ENCODE measurements at regions of chr3 and their contacts with region 1.

Region 1: DNA sequence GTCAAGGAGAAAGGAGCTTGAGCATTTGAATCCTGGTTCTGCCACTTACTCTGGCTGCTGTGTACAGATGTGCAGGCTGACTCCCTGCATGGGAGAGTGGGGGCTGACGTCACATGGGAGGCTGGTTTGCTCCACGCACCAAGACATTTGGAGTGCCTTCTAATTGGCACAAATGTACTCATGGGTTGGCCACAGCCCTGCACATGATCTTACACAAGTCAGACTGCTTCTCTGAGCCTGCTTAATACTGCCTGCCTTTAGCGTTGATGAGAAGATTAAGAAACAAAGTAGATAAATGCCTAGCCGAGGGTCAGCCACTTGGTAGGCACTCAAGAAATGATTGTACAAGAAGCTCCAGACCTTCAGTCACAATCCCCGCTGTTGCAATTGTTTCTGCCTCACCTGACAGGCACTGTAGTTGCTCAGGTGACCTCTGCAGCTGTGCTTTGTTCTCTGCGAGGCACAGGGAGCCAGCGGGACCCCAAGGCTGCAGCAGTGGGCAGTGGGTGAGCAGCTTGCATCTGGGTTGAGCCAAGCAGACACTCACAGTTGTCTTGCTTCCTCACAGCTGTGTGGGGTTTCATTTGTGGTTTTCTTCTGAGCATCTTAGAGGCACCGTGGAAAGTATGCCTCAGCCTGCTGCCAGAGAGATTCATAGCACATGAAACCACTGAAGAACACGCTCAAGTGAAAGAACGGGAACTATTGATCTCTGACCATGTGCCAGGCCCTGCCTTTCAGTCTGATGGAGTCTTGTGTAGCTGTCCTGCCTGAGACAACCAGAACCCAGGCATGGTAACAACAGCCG is 33.1 kb downstream of the GRK7 start:
- DNase-seq: peak in 3 of 5 donors; percentile 17 to 66 (median 55)
- ATAC-seq: peak in 3 of 4 donors; percentile 12 to 59 (median 33)
- H3K4me3 ChIP-seq: peak overlapping the region in 3 of 12 donors; percentile 48 to 62 (median 50)
- H3K27ac ChIP-seq: peak overlapping the region in 11 of 12 donors; percentile 62 to 96 (median 82)
- H3K4me1 ChIP-seq: peaks cover 0 to 37% (median 22%) of the 10 kb centered on the region in 12 donors
- H3K27me3 ChIP-seq: no peaks in the 10 kb centered on the region
- CTCF ChIP-seq: no peak
- POLR2A ChIP-seq: no peak

Region 2: DNA sequence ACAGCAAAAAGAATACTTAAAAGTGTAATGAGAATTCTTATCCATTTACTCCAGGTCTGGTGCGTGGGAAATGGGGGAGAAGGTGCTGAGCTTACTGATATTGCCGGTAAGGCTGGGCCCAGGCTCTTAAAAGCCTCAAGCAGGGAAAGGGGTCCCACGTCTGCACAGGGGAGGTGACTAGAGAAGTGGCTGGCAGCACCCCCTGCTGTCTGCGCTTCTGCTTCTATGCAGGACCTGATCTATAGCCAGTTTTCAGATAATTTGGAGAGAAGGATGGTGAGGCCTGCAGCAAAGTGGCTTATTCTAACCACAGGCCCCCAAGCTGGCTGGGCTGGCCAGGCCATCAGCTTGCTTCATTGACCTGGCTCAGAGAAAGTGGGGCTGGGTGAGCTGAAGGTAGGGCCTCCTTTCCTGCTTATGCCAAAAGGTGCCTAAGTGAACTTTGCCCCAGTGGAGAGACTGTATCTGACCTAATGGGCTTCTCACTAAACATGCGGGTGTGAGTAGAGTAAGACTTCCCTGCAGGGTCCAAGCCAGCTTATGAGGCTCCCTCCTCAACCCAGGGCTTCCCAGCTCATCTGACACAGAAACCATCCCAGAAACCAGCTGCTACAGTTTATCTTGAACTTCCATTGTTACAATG is 49.2 kb after region 1 on chr3:
- intact Hi-C with region 1: no loop called
- DNase-seq: no peak
- ATAC-seq: no peak
- H3K4me3 ChIP-seq: no peak overlapping the region
- H3K27ac ChIP-seq: no peak overlapping the region
- H3K4me1 ChIP-seq: peaks cover 0 to 17% (median 0%) of the 10 kb centered on the region in 12 donors
- H3K27me3 ChIP-seq: no peaks in the 10 kb centered on the region
- CTCF ChIP-seq: no peak
- POLR2A ChIP-seq: no peak

Region 3: DNA sequence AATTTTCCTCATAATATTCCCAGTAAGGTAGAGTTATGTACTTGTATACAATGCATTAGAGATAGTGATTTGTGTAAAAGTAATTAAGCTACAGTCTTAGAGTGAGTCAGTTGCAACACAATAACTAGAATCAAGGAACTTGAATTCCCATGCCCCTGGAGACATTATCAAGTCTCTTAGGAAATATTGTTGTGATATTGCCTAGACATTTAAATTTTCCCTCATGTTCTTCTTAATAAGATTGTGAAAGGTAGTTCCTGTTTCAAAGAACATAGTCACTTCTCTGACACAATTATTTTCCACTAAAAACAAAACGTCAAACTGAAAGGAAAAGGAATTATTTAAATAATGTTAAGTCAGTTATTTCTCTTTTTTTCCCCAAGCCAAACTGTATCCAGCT is 67.2 kb after region 1 on chr3:
- intact Hi-C with region 1: loop called in 1 of 10 experiments (anchors 10 kb)
- DNase-seq: no peak
- ATAC-seq: peak in 3 of 4 donors; percentile 38 to 63 (median 54)
- H3K4me3 ChIP-seq: no peak overlapping the region
- H3K27ac ChIP-seq: peak overlapping the region in 7 of 12 donors; percentile 1 to 79 (median 31)
- H3K4me1 ChIP-seq: peaks cover 0 to 41% (median 14%) of the 10 kb centered on the region in 12 donors
- H3K27me3 ChIP-seq: no peaks in the 10 kb centered on the region
- CTCF ChIP-seq: no peak
- POLR2A ChIP-seq: no peak

Region 4: GRCh38 chr3:141875374-141875892 is 79.1 kb after region 1 on chr3:
- intact Hi-C with region 1: loop called in 4 of 10 experiments (anchors 1 to 5 kb)
- DNase-seq: peak; percentile 87 to 90 (median 87)
- ATAC-seq: peak; percentile 88 to 96 (median 90)
- H3K4me3 ChIP-seq: peak overlapping the region; percentile 52 to 99 (median 90)
- H3K27ac ChIP-seq: peak overlapping the region; percentile 94 to 100 (median 99)
- H3K4me1 ChIP-seq: peaks cover 6 to 38% (median 19%) of the 10 kb centered on the region in 12 donors
- H3K27me3 ChIP-seq: no peaks in the 10 kb centered on the region
- CTCF ChIP-seq: peak; percentile 77 to 96 (median 88)
- POLR2A ChIP-seq: no peak

Region 5: GRCh38 chr3:141928626-141929270 is 132.5 kb after region 1 on chr3:
- intact Hi-C with region 1: no loop called
- DNase-seq: no peak
- ATAC-seq: no peak
- H3K4me3 ChIP-seq: no peak overlapping the region
- H3K27ac ChIP-seq: no peak overlapping the region
- H3K4me1 ChIP-seq: peaks cover 0 to 7% (median 0%) of the 10 kb centered on the region in 12 donors
- H3K27me3 ChIP-seq: no peaks in the 10 kb centered on the region
- CTCF ChIP-seq: no peak
- POLR2A ChIP-seq: no peak

Region 6: GRCh38 chr3:142244056-142244455 is 447.8 kb after region 1 on chr3:
- intact Hi-C with region 1: no loop called
- DNase-seq: no peak
- ATAC-seq: no peak
- H3K4me3 ChIP-seq: no peak overlapping the region
- H3K27ac ChIP-seq: no peak overlapping the region
- H3K4me1 ChIP-seq: no peaks in the 10 kb centered on the region
- H3K27me3 ChIP-seq: peaks cover 0 to 3% (median 0%) of the 10 kb centered on the region in 9 donors
- CTCF ChIP-seq: no peak
- POLR2A ChIP-seq: no peak

Measured in heart left ventricle (tissue), 16 donors.